Heart left ventricle (tissue), 16 donors: ENCODE measurements at regions of chr2 and their contacts with region 1.

Region 1: GRCh38 chr2:128178650-128179460 is 87.9 kb downstream of the UGGT1 start:
- DNase-seq: peak in 4 of 5 donors; percentile 39 to 59 (median 55)
- ATAC-seq: peak; percentile 96 to 98 (median 98)
- H3K4me3 ChIP-seq: no peak overlapping the region
- H3K27ac ChIP-seq: peak overlapping the region in 11 of 12 donors; percentile 34 to 89 (median 80)
- H3K4me1 ChIP-seq: peaks cover 0 to 15% (median 3%) of the 10 kb centered on the region in 12 donors
- H3K27me3 ChIP-seq: no peaks in the 10 kb centered on the region
- CTCF ChIP-seq: peak; percentile 38 to 84 (median 69)
- POLR2A ChIP-seq: no peak

Region 2: GRCh38 chr2:127776122-127776780 is 402.6 kb before region 1 on chr2:
- intact Hi-C with region 1: no loop called
- DNase-seq: no peak
- ATAC-seq: peak; percentile 34 to 41 (median 39)
- H3K4me3 ChIP-seq: no peak overlapping the region
- H3K27ac ChIP-seq: peak overlapping the region in 1 of 12 donors; percentile 33
- H3K4me1 ChIP-seq: peaks cover 0 to 28% (median 14%) of the 10 kb centered on the region in 12 donors
- H3K27me3 ChIP-seq: no peaks in the 10 kb centered on the region
- CTCF ChIP-seq: no peak
- POLR2A ChIP-seq: no peak

Region 3: DNA sequence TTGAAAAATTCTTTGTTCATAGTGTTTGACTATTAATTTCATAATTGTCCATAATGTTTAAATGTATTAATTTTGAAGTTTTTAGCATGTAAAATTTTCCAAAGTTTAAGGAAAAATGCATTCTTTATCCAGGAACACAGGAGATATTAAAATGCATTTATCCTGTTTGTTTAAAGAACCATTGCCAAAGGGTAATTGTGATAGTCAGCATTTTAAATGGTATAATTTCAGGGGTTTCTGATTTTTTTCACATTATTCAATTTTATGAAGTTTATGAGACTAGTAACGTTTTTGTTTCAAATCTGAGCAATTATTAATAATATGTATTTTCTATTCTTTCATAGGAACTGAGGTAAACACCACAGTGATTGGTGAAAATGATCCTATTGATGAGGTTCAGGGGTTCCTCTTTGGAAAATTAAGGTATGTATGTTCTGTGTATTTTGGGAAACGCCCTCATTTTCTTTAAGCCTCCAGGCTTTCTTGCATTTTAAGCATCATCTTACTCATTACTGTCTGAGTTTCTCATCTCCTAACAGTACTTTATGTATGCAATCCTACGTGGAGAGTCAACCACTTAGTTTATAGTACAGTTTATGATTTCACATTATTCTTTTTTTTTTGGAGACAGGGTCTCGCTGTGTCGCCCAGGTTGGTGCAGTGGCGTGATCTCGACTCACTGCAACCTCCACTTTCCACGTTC is 62.8 kb before region 1 on chr2:
- intact Hi-C with region 1: no loop called
- DNase-seq: no peak
- ATAC-seq: no peak
- H3K4me3 ChIP-seq: no peak overlapping the region
- H3K27ac ChIP-seq: no peak overlapping the region
- H3K4me1 ChIP-seq: no peaks in the 10 kb centered on the region
- H3K27me3 ChIP-seq: no peaks in the 10 kb centered on the region
- CTCF ChIP-seq: no peak
- POLR2A ChIP-seq: no peak

Region 4: GRCh38 chr2:128313091-128313836 is 134.4 kb after region 1 on chr2:
- intact Hi-C with region 1: loop called (anchors 5 to 10 kb)
- DNase-seq: peak in 2 of 5 donors; percentile 10 to 26
- ATAC-seq: no peak
- H3K4me3 ChIP-seq: no peak overlapping the region
- H3K27ac ChIP-seq: no peak overlapping the region
- H3K4me1 ChIP-seq: peaks cover 7 to 83% (median 41%) of the 10 kb centered on the region in 12 donors
- H3K27me3 ChIP-seq: no peaks in the 10 kb centered on the region
- CTCF ChIP-seq: no peak
- POLR2A ChIP-seq: no peak

Region 5: GRCh38 chr2:129849559-129850160 is 1670.8 kb after region 1 on chr2:
- intact Hi-C with region 1: loop called in 2 of 10 experiments (anchors 10 kb)
- DNase-seq: no peak
- ATAC-seq: peak in 3 of 4 donors; percentile 44 to 67 (median 58)
- H3K4me3 ChIP-seq: no peak overlapping the region
- H3K27ac ChIP-seq: no peak overlapping the region
- H3K4me1 ChIP-seq: no peaks in the 10 kb centered on the region
- H3K27me3 ChIP-seq: no peaks in the 10 kb centered on the region
- CTCF ChIP-seq: peak; percentile 63 to 84 (median 74)
- POLR2A ChIP-seq: no peak

Region 6: DNA sequence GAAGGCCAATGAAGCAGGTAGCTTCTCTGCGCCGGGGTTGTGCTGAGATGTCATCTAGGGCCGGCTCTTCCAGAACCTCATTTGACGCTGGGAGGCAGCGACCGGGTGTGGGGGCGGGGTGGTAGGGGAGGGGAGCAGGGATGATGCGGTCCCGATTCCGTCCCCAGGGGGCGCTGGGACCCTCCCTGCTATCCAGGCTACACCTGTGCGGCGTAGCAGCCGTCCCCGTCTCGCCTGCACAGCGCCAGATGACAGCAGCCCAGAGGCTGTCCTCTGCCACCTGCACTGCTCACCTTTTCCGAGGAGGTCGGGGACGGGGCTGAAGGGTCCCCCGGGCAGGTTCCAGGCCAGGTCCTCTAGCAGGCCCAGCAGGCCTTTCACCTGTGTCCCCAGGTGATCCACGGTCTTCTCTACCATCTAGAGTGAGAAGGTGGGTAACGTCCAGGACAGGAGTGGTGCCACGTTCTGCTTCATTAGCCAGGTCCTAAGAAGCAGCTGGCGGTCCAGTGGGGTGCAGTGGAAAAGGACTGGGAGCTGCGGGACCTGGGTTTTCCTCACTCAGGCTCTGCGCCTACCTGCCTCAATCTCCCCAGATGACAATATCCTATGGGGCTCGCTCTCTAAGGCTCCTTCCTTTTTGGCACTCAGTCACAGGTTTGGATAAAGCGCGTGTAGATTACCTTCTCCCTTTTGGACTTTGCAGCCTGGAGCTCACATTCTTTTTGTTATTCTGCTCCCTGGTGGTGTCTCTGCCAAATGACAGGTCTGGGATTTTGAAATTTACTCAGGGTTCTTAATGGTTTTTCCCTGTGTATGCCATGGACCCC is 1744.6 kb after region 1 on chr2:
- intact Hi-C with region 1: loop called in 1 of 10 experiments (anchors 5 kb)
- DNase-seq: no peak
- ATAC-seq: peak; percentile 54 to 74 (median 64)
- H3K4me3 ChIP-seq: no peak overlapping the region
- H3K27ac ChIP-seq: no peak overlapping the region
- H3K4me1 ChIP-seq: peaks cover 0 to 11% (median 3%) of the 10 kb centered on the region in 12 donors
- H3K27me3 ChIP-seq: peaks cover 4 to 39% (median 15%) of the 10 kb centered on the region in 9 donors
- CTCF ChIP-seq: peak; percentile 22 to 59 (median 48)
- POLR2A ChIP-seq: no peak